Activated CD4-positive, alpha-beta T cell treated with anti-CD3 and anti-CD28 coated beads for 36 hours (primary cell): ENCODE measurements at regions of chr1 and their contacts with region 1.

Region 1: GRCh38 chr1:100249537-100250257 is at the start of gene DBT:
- DNase-seq: peak; percentile 96
- ATAC-seq: peak; percentile 100
- H3K4me3 Mint-ChIP-seq: no peak within 1 kb of the TSS
- H3K27ac Mint-ChIP-seq: no peak within 1 kb of the TSS
- H3K4me1 Mint-ChIP-seq: peaks cover 16% of the 10 kb centered on the region
- H3K27me3 Mint-ChIP-seq: no peaks in the 10 kb centered on the region
- total RNA-seq, gene DBT: 11.0 to 12.8 TPM

Region 2: GRCh38 chr1:99969729-99970621 is 279.7 kb before region 1 on chr1 and contains the start of gene SLC35A3:
- CTCF ChIA-PET with region 1: no interaction called
- POLR2A ChIA-PET with region 1: no interaction called
- intact Hi-C with region 1: loop called in 1 of 2 experiments (anchors 2 kb)
- DNase-seq: peak; percentile 89
- ATAC-seq: peak; percentile 89
- H3K4me3 Mint-ChIP-seq: peak within 1 kb of the TSS; percentile 100
- H3K27ac Mint-ChIP-seq: peak within 1 kb of the TSS; percentile 94
- H3K4me1 Mint-ChIP-seq: peaks cover 26% of the 10 kb centered on the region
- H3K27me3 Mint-ChIP-seq: no peaks in the 10 kb centered on the region
- total RNA-seq, gene SLC35A3: 11.2 to 13.4 TPM

Region 3: DNA sequence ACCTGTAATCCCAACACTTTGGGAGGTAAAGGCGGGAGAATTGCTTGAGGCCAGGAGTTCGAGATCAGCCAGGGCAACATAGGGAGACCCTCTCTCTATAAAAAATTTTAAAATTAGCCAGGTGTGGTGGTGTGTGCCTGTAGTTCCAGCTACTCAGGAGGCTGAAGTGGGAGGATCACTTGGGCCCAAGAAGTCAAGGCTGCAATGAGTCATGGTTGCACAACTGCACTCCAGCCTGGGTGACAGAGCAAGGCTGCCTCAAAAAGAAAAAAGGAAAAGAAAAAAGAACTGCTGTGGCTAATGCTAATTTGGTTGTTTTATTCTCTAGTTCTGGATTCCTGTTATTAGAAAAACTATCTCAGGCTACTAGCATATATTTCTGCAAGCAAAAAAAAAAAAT is 29.8 kb before region 1 on chr1:
- CTCF ChIA-PET with region 1: interaction called, 3 read pairs
- POLR2A ChIA-PET with region 1: interaction called, 13 read pairs
- intact Hi-C with region 1: no loop called
- DNase-seq: peak; percentile 31
- ATAC-seq: no peak
- H3K4me3 Mint-ChIP-seq: no peak overlapping the region
- H3K27ac Mint-ChIP-seq: no peak overlapping the region
- H3K4me1 Mint-ChIP-seq: peaks cover 6% of the 10 kb centered on the region
- H3K27me3 Mint-ChIP-seq: no peaks in the 10 kb centered on the region

Region 4: DNA sequence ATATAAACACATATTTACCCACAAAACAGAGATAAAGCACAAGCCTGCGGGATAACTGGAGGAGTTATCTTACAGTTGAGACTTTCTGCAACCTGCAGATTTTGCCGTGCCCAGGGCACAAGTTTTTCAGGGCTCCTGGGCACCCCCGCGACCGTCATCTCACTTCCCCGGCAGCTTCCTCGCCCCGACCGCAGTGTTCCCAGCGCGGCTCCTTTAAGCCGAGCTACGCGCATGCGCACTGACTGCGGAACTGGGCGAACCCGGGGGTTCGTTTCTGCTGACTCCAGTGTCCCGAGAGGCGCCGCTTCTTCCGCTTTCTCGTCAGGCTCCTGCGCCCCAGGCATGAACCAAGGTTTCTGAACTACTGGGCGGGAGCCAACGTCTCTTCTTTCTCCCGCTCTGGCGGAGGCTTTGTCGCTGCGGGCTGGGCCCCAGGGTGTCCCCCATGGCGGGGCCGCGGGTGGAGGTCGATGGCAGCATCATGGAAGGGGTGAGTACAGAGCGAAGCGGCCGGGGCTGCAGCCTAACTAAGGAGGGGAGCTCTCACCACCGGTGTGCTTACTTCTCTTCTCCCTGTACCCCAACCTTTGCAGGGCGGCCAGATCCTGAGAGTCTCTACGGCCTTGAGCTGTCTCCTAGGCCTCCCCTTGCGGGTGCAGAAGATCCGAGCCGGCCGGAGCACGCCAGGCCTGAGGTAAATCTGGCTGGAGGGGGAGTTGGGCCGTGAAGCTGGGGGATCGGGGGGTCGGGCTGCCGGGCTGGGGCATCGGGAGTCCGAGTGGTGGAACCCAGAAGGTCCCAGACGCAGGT is 16.4 kb after region 1 on chr1 and contains the start of gene RTCA:
- CTCF ChIA-PET with region 1: interaction called, 16 read pairs
- POLR2A ChIA-PET with region 1: interaction called, 6 read pairs
- intact Hi-C with region 1: loop called (anchors 1 kb)
- DNase-seq: peak; percentile 97
- ATAC-seq: peak; percentile 93
- H3K4me3 Mint-ChIP-seq: peak within 1 kb of the TSS; percentile 100
- H3K27ac Mint-ChIP-seq: peak within 1 kb of the TSS; percentile 99
- H3K4me1 Mint-ChIP-seq: peaks cover 32% of the 10 kb centered on the region
- H3K27me3 Mint-ChIP-seq: no peaks in the 10 kb centered on the region
- total RNA-seq, gene RTCA: 47.8 to 53.0 TPM